K562 (cell line): ENCODE measurements at regions of chr2 and their contacts with region 1.

Region 1: GRCh38 chr2:121530212-121530705 is 421 bp upstream of the RNU4ATAC start:
- DNase-seq: peak; percentile 77 to 84 (median 78)
- ATAC-seq: peak; percentile 76
- H3K4me3 ChIP-seq: peak overlapping the region; percentile 66
- H3K27ac ChIP-seq: peak overlapping the region; percentile 100
- H3K4me1 ChIP-seq: peaks cover 30 to 35% of the 10 kb centered on the region in 2 experiments
- H3K27me3 ChIP-seq: no peaks in the 10 kb centered on the region
- CTCF ChIP-seq: no peak
- EP300 ChIP-seq: no peak
- POLR2A ChIP-seq: no peak
- RAD21 ChIP-seq: no peak

Region 2: GRCh38 chr2:121076885-121077549 is 453.2 kb before region 1 on chr2:
- CTCF ChIA-PET with region 1: no interaction called
- POLR2A ChIA-PET with region 1: interaction called, 12 read pairs
- in situ Hi-C with region 1: no loop called
- intact Hi-C with region 1: loop called (anchors 1 kb)
- DNase-seq: peak; percentile 80 to 86 (median 86)
- ATAC-seq: peak; percentile 81
- H3K4me3 ChIP-seq: no peak overlapping the region
- H3K27ac ChIP-seq: no peak overlapping the region
- H3K4me1 ChIP-seq: peaks cover 0 to 17% of the 10 kb centered on the region in 2 experiments; a peak in 2 of 5 replicates
- H3K27me3 ChIP-seq: peaks cover 6 to 52% of the 10 kb centered on the region in 2 experiments; a peak in 3 of 5 replicates
- CTCF ChIP-seq: peak; percentile 89 to 95 (median 89)
- EP300 ChIP-seq: no peak
- POLR2A ChIP-seq: no peak
- RAD21 ChIP-seq: peak in 1 of 2 experiments; percentile 59; a peak in 3 of 4 replicates

Region 3: GRCh38 chr2:121519732-121520640 is 10.3 kb before region 1 on chr2:
- CTCF ChIA-PET with region 1: no interaction called
- POLR2A ChIA-PET with region 1: interaction called, 18 read pairs
- in situ Hi-C with region 1: no loop called
- intact Hi-C with region 1: no loop called
- DNase-seq: no peak
- ATAC-seq: no peak
- H3K4me3 ChIP-seq: no peak overlapping the region
- H3K27ac ChIP-seq: no peak overlapping the region
- H3K4me1 ChIP-seq: peaks cover 4 to 7% of the 10 kb centered on the region in 2 experiments; a peak in 3 of 5 replicates
- H3K27me3 ChIP-seq: no peaks in the 10 kb centered on the region
- CTCF ChIP-seq: no peak
- EP300 ChIP-seq: no peak
- POLR2A ChIP-seq: no peak
- RAD21 ChIP-seq: no peak

Region 4: DNA sequence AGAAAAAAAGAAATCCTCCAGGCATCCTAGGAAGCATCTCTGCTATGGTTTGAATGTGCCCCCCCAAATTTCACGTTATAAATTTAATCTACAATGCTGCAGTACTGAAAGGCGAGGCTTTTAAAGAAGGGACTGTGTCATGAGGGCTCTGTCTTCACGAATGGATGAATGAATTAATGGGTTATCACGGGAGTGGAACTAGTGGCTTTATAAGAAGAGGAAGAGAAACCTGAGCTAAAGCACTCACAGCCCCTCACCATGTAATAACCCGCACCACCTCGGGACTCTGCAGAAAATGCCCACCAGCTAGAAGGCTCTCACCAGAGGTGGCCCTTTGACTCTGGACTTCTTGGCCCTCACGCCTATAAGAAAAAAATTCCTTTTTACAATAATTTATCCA is 28.1 kb after region 1 on chr2:
- CTCF ChIA-PET with region 1: interaction called, 5 read pairs
- POLR2A ChIA-PET with region 1: interaction called, 21 read pairs
- in situ Hi-C with region 1: no loop called
- intact Hi-C with region 1: no loop called
- DNase-seq: no peak
- ATAC-seq: no peak
- H3K4me3 ChIP-seq: no peak overlapping the region
- H3K27ac ChIP-seq: no peak overlapping the region
- H3K4me1 ChIP-seq: peaks cover 10 to 16% of the 10 kb centered on the region in 2 experiments
- H3K27me3 ChIP-seq: no peaks in the 10 kb centered on the region
- CTCF ChIP-seq: no peak
- EP300 ChIP-seq: no peak
- POLR2A ChIP-seq: no peak
- RAD21 ChIP-seq: no peak

Region 5: DNA sequence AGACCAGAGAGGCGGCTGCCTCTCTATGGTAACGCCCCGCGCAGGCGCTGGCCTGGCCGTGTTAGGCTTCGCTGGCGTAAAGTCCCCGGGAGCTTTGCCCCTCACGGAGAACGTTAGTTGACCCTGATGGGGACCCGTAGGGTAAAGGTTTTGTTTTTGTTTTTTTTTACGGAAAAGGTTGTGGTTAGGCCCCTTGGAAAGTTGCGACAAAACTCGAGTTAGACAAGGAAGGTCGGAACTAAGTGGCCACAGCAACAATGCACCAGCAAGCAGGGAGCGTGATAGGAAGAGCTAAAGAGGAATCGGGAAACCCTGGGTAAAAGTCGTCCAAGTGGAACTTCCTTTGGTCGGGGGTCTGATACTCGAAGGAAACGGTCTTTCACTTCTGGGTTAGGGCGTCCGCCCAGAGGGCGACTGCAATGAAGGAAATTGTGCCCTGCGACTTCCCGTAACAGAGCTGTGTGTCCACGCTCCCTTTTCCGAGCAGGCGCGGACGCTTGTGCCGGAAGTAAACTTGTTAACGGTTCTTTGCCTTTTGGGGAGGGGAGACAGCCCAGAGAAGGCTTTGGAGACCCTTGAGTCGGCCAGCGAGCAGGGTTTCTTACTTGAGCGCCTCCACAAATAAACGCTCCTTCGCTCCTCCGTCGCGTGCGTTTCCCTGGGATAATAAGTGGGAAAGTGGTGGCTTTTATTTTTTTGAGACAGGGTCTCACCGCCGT is 119.5 kb after region 1 on chr2:
- CTCF ChIA-PET with region 1: no interaction called
- POLR2A ChIA-PET with region 1: interaction called, 31 read pairs
- in situ Hi-C with region 1: no loop called
- intact Hi-C with region 1: loop called (anchors 1 kb)
- DNase-seq: peak; percentile 95 to 98 (median 96)
- ATAC-seq: peak; percentile 93
- H3K4me3 ChIP-seq: peak overlapping the region; percentile 88
- H3K27ac ChIP-seq: peak overlapping the region; percentile 100
- H3K4me1 ChIP-seq: peaks cover 12 to 23% of the 10 kb centered on the region in 2 experiments
- H3K27me3 ChIP-seq: no peaks in the 10 kb centered on the region
- CTCF ChIP-seq: no peak
- EP300 ChIP-seq: peak; percentile 57
- POLR2A ChIP-seq: peak; percentile 95
- RAD21 ChIP-seq: no peak

Region 6: GRCh38 chr2:121736462-121737341 is 206.4 kb after region 1 on chr2 and contains the start of gene NIFK:
- CTCF ChIA-PET with region 1: no interaction called
- POLR2A ChIA-PET with region 1: interaction called, 14 read pairs
- in situ Hi-C with region 1: no loop called
- intact Hi-C with region 1: loop called (anchors 5 kb)
- DNase-seq: peak; percentile 97 to 98 (median 98)
- ATAC-seq: peak; percentile 97
- H3K4me3 ChIP-seq: peak within 1 kb of the TSS; percentile 92
- H3K27ac ChIP-seq: peak within 1 kb of the TSS; percentile 81
- H3K4me1 ChIP-seq: peaks cover 6 to 20% of the 10 kb centered on the region in 2 experiments; a peak in 4 of 5 replicates
- H3K27me3 ChIP-seq: no peaks in the 10 kb centered on the region
- CTCF ChIP-seq: 0 out of 6 replicates have a peak, but pooled peaks of 1 of the 3 experiments have one; percentile 15
- EP300 ChIP-seq: no peak
- POLR2A ChIP-seq: peak; percentile 89
- RAD21 ChIP-seq: no peak
- polyA plus RNA-seq, gene NIFK: 191 to 223 TPM

Region 7: DNA sequence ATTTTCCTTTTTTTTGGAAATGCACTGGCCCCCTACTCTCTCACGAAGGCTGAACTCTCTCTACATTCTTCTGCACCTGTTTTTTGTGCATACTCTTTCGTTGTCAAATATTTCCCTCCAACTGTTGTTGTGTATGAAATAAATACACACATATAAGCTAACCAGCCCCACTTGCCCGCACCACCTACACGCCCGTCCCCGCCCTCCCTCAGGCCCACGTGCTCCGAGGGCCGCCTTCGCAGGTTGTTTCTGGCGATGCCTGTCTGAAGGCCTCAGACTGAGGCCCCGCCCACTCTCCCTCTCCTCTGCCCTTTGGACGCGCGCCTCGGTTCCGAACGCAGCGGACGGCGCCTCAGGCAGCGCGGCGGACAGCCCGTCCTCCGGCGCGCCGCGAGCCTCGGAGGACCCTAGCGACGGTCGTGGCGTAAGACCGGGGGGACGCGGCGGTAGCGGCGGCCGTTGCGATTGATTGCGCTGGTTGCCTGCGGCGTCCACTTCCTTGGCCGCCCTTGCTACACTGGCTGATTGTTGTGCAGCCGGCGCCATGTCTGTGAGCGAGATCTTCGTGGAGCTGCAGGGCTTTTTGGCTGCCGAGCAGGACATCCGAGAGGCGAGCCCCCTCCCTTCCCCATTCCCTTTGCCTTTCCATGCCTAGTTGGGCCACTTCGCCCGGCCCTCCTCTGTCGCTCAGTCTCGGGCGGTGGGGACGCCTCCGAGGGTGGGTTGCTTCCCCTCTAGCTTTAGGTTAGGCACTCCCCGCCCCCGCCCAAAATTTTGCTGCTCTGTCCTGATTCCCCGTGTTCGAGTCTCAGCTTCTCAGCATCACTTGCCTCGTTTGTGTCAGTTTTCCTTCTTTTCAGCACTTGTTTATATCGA is 225.2 kb after region 1 on chr2 and contains the start of gene TSN:
- CTCF ChIA-PET with region 1: no interaction called
- POLR2A ChIA-PET with region 1: interaction called, 15 read pairs
- in situ Hi-C with region 1: no loop called
- intact Hi-C with region 1: no loop called
- DNase-seq: peak; percentile 93 to 100 (median 94)
- ATAC-seq: peak; percentile 99
- H3K4me3 ChIP-seq: peak within 1 kb of the TSS; percentile 96
- H3K27ac ChIP-seq: peak within 1 kb of the TSS; percentile 87
- H3K4me1 ChIP-seq: peaks cover 0 to 3% of the 10 kb centered on the region in 2 experiments; a peak in 3 of 5 replicates
- H3K27me3 ChIP-seq: no peaks in the 10 kb centered on the region
- CTCF ChIP-seq: no peak
- EP300 ChIP-seq: peak; percentile 40; the same call in 1 of the 2 replicates
- POLR2A ChIP-seq: peak; percentile 85
- RAD21 ChIP-seq: no peak
- polyA plus RNA-seq, gene TSN: 142 to 152 TPM

Region 8: GRCh38 chr2:121910139-121910538 is 379.9 kb after region 1 on chr2:
- CTCF ChIA-PET with region 1: no interaction called
- POLR2A ChIA-PET with region 1: no interaction called
- in situ Hi-C with region 1: no loop called
- intact Hi-C with region 1: no loop called
- DNase-seq: no peak
- ATAC-seq: no peak
- H3K4me3 ChIP-seq: no peak overlapping the region
- H3K27ac ChIP-seq: no peak overlapping the region
- H3K4me1 ChIP-seq: no peaks in the 10 kb centered on the region
- H3K27me3 ChIP-seq: peaks cover 9 to 12% of the 10 kb centered on the region in 2 experiments; a peak in 4 of 5 replicates
- CTCF ChIP-seq: no peak
- EP300 ChIP-seq: no peak
- POLR2A ChIP-seq: no peak
- RAD21 ChIP-seq: no peak

Region 9: DNA sequence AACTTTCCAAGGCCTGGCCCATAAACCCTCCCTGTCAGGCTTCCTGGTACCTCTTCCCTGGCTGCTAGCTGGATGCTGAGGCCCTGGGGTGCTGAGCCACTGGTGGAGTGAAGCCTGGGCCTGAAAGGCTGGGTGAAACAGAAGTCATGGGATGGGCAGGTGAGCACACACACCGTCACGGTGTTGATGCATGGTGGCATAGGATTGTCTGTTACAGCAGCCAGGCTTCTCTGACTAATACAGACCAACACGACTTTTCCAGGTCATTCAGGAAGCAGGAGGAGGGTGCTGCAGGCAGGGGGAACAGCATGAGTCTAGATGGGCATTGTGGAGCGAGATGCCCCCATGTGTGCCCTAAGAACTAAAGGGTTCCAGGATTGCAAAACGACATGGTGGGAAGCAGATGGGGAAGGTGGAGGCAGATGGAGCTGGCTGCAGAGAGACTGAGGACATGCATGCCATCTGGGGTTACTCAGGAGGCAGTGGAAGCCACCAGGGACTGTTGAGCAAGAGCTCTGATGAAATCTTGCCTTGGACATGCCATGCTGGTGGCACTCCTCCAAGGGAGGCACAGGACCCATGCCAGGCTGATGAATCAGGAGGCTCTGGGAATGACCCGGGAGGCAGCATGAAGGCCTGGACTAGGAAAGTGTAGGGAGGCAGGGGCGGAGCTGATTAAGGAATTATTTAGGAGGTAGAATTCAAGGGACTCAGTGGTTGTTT is 706.1 kb after region 1 on chr2:
- CTCF ChIA-PET with region 1: no interaction called
- POLR2A ChIA-PET with region 1: no interaction called
- in situ Hi-C with region 1: no loop called
- intact Hi-C with region 1: no loop called
- DNase-seq: no peak
- ATAC-seq: no peak
- H3K4me3 ChIP-seq: no peak overlapping the region
- H3K27ac ChIP-seq: no peak overlapping the region
- H3K4me1 ChIP-seq: no peaks in the 10 kb centered on the region
- H3K27me3 ChIP-seq: no peaks in the 10 kb centered on the region; a peak in 1 of 5 replicates
- CTCF ChIP-seq: no peak
- EP300 ChIP-seq: no peak
- POLR2A ChIP-seq: no peak
- RAD21 ChIP-seq: no peak